Kidney (tissue), 22 donors: ENCODE measurements at regions of chr14 and their contacts with region 1.

Region 1: DNA sequence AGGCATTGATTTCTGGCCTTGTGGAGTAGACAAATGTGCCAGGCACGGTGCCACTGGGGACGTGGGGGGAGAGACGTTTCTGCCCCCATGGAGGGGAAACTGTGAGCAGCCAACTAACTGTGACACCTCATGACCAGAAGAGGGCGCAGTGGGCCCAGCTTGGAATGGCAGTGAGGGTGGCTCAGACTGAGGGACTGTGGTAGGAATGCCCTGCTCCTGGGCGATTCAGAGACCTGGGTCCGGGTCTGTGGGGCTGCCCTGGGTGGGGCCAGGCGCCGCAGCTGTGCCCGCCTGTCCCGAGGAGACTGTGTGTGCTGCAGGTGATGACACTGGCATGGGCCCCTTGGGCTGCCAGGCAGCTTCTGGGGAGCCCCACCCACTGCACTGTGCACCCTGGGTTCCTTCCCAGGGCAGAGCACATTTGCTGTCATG is 60.6 kb downstream of the SLC25A47 start:
- DNase-seq: peak in 4 of 5 donors; percentile 64 to 83 (median 76)
- H3K4me3 ChIP-seq: no peak overlapping the region
- H3K27ac ChIP-seq: no peak overlapping the region
- H3K4me1 ChIP-seq: peaks cover 0 to 4% (median 0%) of the 10 kb centered on the region in 3 donors
- H3K27me3 ChIP-seq: no peaks in the 10 kb centered on the region
- CTCF ChIP-seq: peak; percentile 67

Region 2: GRCh38 chr14:100645192-100645990 is 261.6 kb after region 1 on chr14:
- intact Hi-C with region 1: loop called (anchors 5 kb)
- DNase-seq: peak in 4 of 5 donors; percentile 84 to 90 (median 86)
- H3K4me3 ChIP-seq: no peak overlapping the region
- H3K27ac ChIP-seq: no peak overlapping the region
- H3K4me1 ChIP-seq: peaks cover 0 to 10% (median 3%) of the 10 kb centered on the region in 3 donors
- H3K27me3 ChIP-seq: no peaks in the 10 kb centered on the region
- CTCF ChIP-seq: peak; percentile 86

Region 3: DNA sequence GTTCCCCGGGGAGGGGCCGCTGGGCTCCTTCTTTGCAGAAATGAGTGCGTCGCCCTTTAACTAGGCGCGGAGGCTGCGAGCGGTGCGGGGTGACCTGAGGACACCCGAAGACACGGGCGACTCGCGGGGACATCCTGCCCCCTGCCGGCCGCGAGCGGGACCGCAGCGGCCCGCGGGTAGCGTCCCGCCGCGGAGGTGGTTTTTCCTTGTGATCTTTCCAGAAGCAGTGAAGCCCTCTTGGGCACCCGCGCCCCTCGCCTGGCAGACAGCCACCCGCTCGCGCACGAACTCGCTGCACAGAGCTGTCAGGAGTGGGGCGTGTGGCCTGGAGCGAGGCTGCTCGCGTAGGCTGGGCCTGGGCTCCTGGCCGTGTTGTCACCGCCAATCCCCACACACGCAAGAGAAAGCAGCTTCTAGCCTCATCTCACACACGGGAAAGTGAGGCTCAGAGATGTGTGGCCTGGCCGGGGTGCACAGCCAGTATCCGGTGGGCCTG is 1244.8 kb after region 1 on chr14:
- intact Hi-C with region 1: loop called (anchors 10 kb)
- DNase-seq: peak; percentile 76 to 91 (median 83)
- H3K4me3 ChIP-seq: peak overlapping the region in 1 of 3 donors; percentile 26
- H3K27ac ChIP-seq: no peak overlapping the region
- H3K4me1 ChIP-seq: peaks cover 0 to 6% (median 0%) of the 10 kb centered on the region in 3 donors
- H3K27me3 ChIP-seq: no peaks in the 10 kb centered on the region
- CTCF ChIP-seq: peak; percentile 94